H1 (cell line): ENCODE measurements at regions of chr3 and their contacts with region 1.

Region 1: DNA sequence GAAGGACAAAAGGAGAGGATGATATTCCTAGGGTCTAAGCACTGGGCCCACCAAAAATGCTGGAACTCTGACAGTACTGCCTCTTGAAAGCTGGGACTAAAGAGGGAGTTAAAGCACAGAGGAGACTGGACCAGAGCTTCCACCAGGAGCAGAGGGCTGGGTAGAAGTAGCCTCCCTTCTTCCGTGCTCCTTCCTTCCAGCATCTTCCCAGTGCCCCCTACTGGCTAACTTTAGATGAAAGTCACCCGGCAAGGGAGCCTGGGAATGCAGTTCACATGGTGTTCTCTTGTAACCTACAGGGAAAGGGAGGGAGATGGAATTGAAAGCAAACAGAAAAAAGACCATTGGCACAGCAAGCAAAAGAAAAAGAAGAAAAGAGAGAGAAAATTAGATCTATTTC is 106.1 kb upstream of the COL8A1 start:
- DNase-seq: peak; percentile 73
- H3K4me3 ChIP-seq: no peak overlapping the region
- H3K27ac ChIP-seq: no peak overlapping the region
- H3K4me1 ChIP-seq: peaks cover 0 to 6% (median 3%) of the 10 kb centered on the region in 4 experiments; a peak in 4 of 7 replicates
- H3K27me3 ChIP-seq: no peaks in the 10 kb centered on the region
- CTCF ChIP-seq: peak; percentile 68 to 89 (median 85)
- EP300 ChIP-seq: no peak
- POLR2A ChIP-seq: no peak
- RAD21 ChIP-seq: peak; percentile 80 to 84

Region 2: GRCh38 chr3:99373088-99373880 is 159.0 kb before region 1 on chr3:
- CTCF ChIA-PET with region 1: no interaction called
- POLR2A ChIA-PET with region 1: no interaction called
- DNase-seq: no peak
- H3K4me3 ChIP-seq: no peak overlapping the region
- H3K27ac ChIP-seq: no peak overlapping the region
- H3K4me1 ChIP-seq: no peaks in the 10 kb centered on the region
- H3K27me3 ChIP-seq: no peaks in the 10 kb centered on the region
- CTCF ChIP-seq: no peak
- EP300 ChIP-seq: no peak
- POLR2A ChIP-seq: no peak
- RAD21 ChIP-seq: no peak

Region 3: GRCh38 chr3:99520513-99520912 is 11.7 kb before region 1 on chr3:
- CTCF ChIA-PET with region 1: interaction called, 11 read pairs
- POLR2A ChIA-PET with region 1: no interaction called
- DNase-seq: no peak
- H3K4me3 ChIP-seq: no peak overlapping the region
- H3K27ac ChIP-seq: no peak overlapping the region
- H3K4me1 ChIP-seq: no peaks in the 10 kb centered on the region
- H3K27me3 ChIP-seq: no peaks in the 10 kb centered on the region
- CTCF ChIP-seq: no peak
- EP300 ChIP-seq: no peak
- POLR2A ChIP-seq: no peak
- RAD21 ChIP-seq: no peak

Region 4: GRCh38 chr3:99562138-99562537 is 29.9 kb after region 1 on chr3:
- CTCF ChIA-PET with region 1: no interaction called
- POLR2A ChIA-PET with region 1: no interaction called
- DNase-seq: peak in 1 of 2 experiments; percentile 51
- H3K4me3 ChIP-seq: no peak overlapping the region
- H3K27ac ChIP-seq: no peak overlapping the region
- H3K4me1 ChIP-seq: no peaks in the 10 kb centered on the region
- H3K27me3 ChIP-seq: peaks cover 0 to 1% (median 0%) of the 10 kb centered on the region in 4 experiments; a peak in 1 of 7 replicates
- CTCF ChIP-seq: no peak
- EP300 ChIP-seq: no peak
- POLR2A ChIP-seq: no peak
- RAD21 ChIP-seq: no peak

Region 5: GRCh38 chr3:99794485-99794884 is 262.2 kb after region 1 on chr3:
- CTCF ChIA-PET with region 1: no interaction called
- POLR2A ChIA-PET with region 1: no interaction called
- DNase-seq: no peak
- H3K4me3 ChIP-seq: no peak overlapping the region
- H3K27ac ChIP-seq: no peak overlapping the region
- H3K4me1 ChIP-seq: no peaks in the 10 kb centered on the region
- H3K27me3 ChIP-seq: no peaks in the 10 kb centered on the region
- CTCF ChIP-seq: no peak
- EP300 ChIP-seq: no peak
- POLR2A ChIP-seq: no peak
- RAD21 ChIP-seq: no peak